ENCODE measurements at regions of chr9 and their contacts with region 1.

Region 1: DNA sequence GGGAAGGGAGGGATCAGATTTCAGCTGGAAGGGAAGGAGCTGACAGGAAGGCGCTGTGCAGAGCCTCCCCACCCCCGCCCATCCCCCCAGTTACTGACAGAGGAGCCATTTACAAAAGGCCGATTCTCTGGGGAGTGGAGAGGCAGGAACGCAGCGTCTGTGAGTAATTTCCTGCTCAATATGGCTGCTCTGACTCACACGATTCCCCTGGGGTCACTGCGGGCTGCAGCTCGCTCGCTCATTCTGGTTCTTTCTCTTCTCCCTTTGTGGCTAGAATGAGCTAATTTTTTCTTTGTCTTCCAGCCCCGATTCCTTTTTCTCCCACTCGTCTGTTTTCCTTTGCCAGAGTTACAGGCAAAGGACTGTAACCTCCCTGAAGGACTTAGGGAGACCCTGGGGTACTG is 28.8 kb downstream of the PTPA start:
- DNase-seq: peak; percentile 88 to 96 (median 94)
- H3K4me3 ChIP-seq: peak overlapping the region in 5 of 7 experiments; percentile 31 to 70 (median 55)
- H3K27ac ChIP-seq: peak overlapping the region; percentile 89 to 96
- H3K4me1 ChIP-seq: peaks cover 4 to 50% (median 45%) of the 10 kb centered on the region in 4 experiments
- H3K27me3 ChIP-seq: no peaks in the 10 kb centered on the region

Region 2: GRCh38 chr9:129068990-129069861 is 70.8 kb before region 1 on chr9:
- CTCF ChIA-PET with region 1: no interaction called
- POLR2A ChIA-PET with region 1: no interaction called
- DNase-seq: peak; percentile 96 to 99 (median 99)
- H3K4me3 ChIP-seq: peak overlapping the region in 5 of 7 experiments; percentile 10 to 66 (median 26)
- H3K27ac ChIP-seq: peak overlapping the region; percentile 46 to 82
- H3K4me1 ChIP-seq: peaks cover 2 to 54% (median 46%) of the 10 kb centered on the region in 4 experiments
- H3K27me3 ChIP-seq: no peaks in the 10 kb centered on the region

Region 3: DNA sequence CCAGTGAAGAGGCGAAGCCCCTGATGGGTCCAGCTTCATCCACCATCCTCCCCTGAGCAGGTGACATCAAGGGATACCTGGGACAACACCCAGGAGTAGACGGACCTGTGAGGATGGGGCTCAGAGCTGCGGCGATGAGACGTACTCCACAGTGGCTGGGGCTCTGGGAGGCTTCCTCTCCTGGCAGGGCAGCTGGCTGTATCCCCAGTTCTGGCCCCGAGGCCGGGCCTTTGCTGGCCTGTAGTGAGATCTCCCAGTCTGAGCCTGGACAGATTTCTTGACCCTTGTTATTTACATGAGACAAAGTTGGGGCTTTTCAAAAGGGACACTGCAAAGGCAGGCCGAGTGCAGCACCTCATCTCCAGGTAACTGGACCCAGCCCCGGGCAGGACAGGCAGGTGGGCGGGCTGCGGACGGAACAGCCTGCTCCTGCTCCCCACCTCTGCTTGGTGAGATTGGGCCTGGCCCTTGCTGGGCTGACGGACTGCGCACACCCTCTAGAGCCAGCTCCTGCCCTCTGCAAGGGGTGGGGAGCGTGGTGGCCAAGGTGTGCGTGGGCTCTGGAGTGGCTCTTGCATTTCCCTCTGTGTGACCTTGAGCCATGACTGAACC is 15.0 kb after region 1 on chr9:
- CTCF ChIA-PET with region 1: interaction called, 28 read pairs
- POLR2A ChIA-PET with region 1: no interaction called
- DNase-seq: no peak
- H3K4me3 ChIP-seq: no peak overlapping the region
- H3K27ac ChIP-seq: no peak overlapping the region
- H3K4me1 ChIP-seq: no peaks in the 10 kb centered on the region
- H3K27me3 ChIP-seq: no peaks in the 10 kb centered on the region

Region 4: GRCh38 chr9:129166623-129167557 is 26.9 kb after region 1 on chr9:
- CTCF ChIA-PET with region 1: interaction called, 46 read pairs
- POLR2A ChIA-PET with region 1: no interaction called
- DNase-seq: peak; percentile 58 to 67 (median 59)
- H3K4me3 ChIP-seq: peak overlapping the region in 5 of 7 experiments; percentile 42 to 63 (median 51)
- H3K27ac ChIP-seq: peak overlapping the region; percentile 54 to 69
- H3K4me1 ChIP-seq: peaks cover 4 to 58% (median 37%) of the 10 kb centered on the region in 4 experiments
- H3K27me3 ChIP-seq: no peaks in the 10 kb centered on the region

Region 5: GRCh38 chr9:129242941-129243561 is 103.1 kb after region 1 on chr9:
- CTCF ChIA-PET with region 1: no interaction called
- POLR2A ChIA-PET with region 1: no interaction called
- DNase-seq: no peak
- H3K4me3 ChIP-seq: no peak overlapping the region
- H3K27ac ChIP-seq: no peak overlapping the region
- H3K4me1 ChIP-seq: peaks cover 0 to 5% (median 3%) of the 10 kb centered on the region in 4 experiments
- H3K27me3 ChIP-seq: no peaks in the 10 kb centered on the region

Region 6: DNA sequence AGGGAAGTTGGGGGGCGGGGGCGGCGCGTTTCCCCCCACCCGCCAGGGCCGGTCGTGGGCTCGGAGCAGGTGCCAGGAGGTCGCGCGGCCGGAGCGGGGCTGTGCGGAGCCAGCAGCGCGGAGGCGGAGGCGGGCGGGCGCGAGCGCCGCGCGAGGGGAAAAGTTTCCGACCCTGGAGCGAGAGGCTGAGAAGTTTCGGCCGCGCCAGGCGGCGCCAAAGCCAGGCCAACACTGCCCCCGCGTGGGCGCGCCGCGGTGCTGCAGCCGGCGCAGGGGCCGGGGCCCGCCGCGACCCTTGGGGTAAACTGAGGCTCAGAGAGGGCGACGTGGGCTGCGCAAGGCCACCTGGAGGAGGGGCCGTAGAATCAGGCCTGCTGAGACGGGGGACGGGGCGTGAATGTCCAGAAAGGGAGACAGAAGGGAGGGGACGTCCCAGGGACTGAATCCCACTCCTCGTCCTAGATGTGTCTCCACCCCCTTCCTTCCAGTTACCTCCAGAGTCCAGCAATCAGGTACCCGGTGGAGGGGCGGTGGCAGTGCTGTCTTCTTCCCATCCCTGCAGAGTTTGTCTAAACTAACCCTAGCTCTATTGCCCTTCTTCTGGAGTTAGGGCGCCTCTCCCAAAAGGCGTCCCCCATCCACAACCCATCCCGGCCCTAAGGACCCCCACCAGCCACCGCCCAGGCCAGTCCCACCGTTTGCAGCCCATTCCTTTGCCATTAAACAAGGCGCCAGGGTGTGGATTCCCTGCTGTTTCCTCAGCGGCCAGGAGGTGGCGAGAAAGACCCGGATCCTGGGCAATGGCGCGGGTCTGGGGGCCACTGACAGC is 470.7 kb after region 1 on chr9:
- CTCF ChIA-PET with region 1: interaction called, 16 read pairs
- POLR2A ChIA-PET with region 1: interaction called, 4 read pairs
- DNase-seq: peak; percentile 60 to 76 (median 72)
- H3K4me3 ChIP-seq: peak overlapping the region; percentile 48 to 75 (median 66)
- H3K27ac ChIP-seq: peak overlapping the region in 1 of 2 experiments; percentile 34
- H3K4me1 ChIP-seq: peaks cover 0 to 54% (median 50%) of the 10 kb centered on the region in 4 experiments
- H3K27me3 ChIP-seq: no peaks in the 10 kb centered on the region

Measured in common myeloid progenitor, CD34-positive (primary cell).